H1 (cell line): ENCODE measurements at regions of chr17 and their contacts with region 1.

Region 1: GRCh38 chr17:28937044-28937729 is 14.1 kb downstream of the PHF12 start:
- DNase-seq: no peak
- H3K4me3 ChIP-seq: no peak overlapping the region
- H3K27ac ChIP-seq: no peak overlapping the region
- H3K4me1 ChIP-seq: peaks cover 2 to 22% (median 16%) of the 10 kb centered on the region in 4 experiments; a peak in 5 of 7 replicates
- H3K27me3 ChIP-seq: no peaks in the 10 kb centered on the region
- CTCF ChIP-seq: no peak
- EP300 ChIP-seq: no peak
- POLR2A ChIP-seq: no peak
- RAD21 ChIP-seq: no peak

Region 2: DNA sequence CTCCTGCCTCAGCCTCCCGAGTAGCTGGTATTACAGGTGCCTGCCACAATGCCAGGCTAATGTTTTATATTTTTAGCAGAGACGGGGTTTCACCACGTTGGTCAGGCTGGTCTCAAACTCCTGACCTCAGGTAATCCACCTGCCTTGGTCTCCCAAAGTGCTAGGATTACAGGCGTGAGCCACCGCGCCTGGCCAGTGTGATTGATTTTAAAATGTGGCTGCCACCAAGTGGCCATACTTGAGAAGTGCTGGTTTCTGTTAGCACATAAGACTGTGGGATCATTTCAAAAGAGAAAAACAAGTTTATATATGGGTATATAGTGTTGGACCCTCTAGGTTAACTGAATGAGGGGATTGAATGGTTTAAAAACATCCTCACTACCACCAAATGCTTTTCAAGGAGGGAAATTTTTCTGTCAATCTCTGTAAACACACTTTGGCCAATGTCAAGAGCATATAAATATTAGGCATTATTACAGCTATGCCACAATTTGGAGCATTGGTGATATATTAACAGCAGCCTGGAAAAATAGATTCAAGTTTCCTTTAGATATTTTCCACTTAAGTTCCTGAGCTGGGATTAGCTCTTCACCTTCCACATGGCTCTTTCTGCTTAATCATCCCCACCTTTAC is 20.8 kb before region 1 on chr17:
- CTCF ChIA-PET with region 1: interaction called, 12 read pairs
- POLR2A ChIA-PET with region 1: interaction called, 9 read pairs
- DNase-seq: no peak
- H3K4me3 ChIP-seq: no peak overlapping the region
- H3K27ac ChIP-seq: no peak overlapping the region
- H3K4me1 ChIP-seq: no peaks in the 10 kb centered on the region; a peak in 2 of 7 replicates
- H3K27me3 ChIP-seq: no peaks in the 10 kb centered on the region
- CTCF ChIP-seq: peak; percentile 30 to 61 (median 47)
- EP300 ChIP-seq: no peak
- POLR2A ChIP-seq: no peak
- RAD21 ChIP-seq: peak; percentile 33 to 51; a peak in 3 of 4 replicates

Region 3: GRCh38 chr17:28925912-28926365 is 11.2 kb before region 1 on chr17:
- CTCF ChIA-PET with region 1: interaction called, 7 read pairs
- POLR2A ChIA-PET with region 1: interaction called, 10 read pairs
- DNase-seq: no peak
- H3K4me3 ChIP-seq: no peak overlapping the region
- H3K27ac ChIP-seq: no peak overlapping the region
- H3K4me1 ChIP-seq: no peaks in the 10 kb centered on the region
- H3K27me3 ChIP-seq: no peaks in the 10 kb centered on the region
- CTCF ChIP-seq: no peak
- EP300 ChIP-seq: no peak
- POLR2A ChIP-seq: no peak
- RAD21 ChIP-seq: no peak